ENCODE measurements at regions of chr9 and their contacts with region 1.

Region 1: GRCh38 chr9:132849185-132849706 is 28.8 kb downstream of the AK8 start:
- DNase-seq: no peak
- ATAC-seq: no peak
- H3K4me3 Mint-ChIP-seq: no peak overlapping the region
- H3K27ac Mint-ChIP-seq: peak overlapping the region; percentile 15; the same call in 1 of the 2 replicates
- H3K4me1 Mint-ChIP-seq: peaks cover 15% of the 10 kb centered on the region
- H3K27me3 Mint-ChIP-seq: no peaks in the 10 kb centered on the region; the same call in 1 of the 2 replicates
- CTCF ChIP-seq: no peak

Region 2: GRCh38 chr9:132018957-132019405 is 830.3 kb before region 1 on chr9:
- CTCF ChIA-PET with region 1: no interaction called
- POLR2A ChIA-PET with region 1: no interaction called
- DNase-seq: no peak
- ATAC-seq: no peak
- H3K4me3 Mint-ChIP-seq: no peak overlapping the region
- H3K27ac Mint-ChIP-seq: no peak overlapping the region
- H3K4me1 Mint-ChIP-seq: peaks cover 73% of the 10 kb centered on the region
- H3K27me3 Mint-ChIP-seq: no peaks in the 10 kb centered on the region
- CTCF ChIP-seq: no peak

Region 3: DNA sequence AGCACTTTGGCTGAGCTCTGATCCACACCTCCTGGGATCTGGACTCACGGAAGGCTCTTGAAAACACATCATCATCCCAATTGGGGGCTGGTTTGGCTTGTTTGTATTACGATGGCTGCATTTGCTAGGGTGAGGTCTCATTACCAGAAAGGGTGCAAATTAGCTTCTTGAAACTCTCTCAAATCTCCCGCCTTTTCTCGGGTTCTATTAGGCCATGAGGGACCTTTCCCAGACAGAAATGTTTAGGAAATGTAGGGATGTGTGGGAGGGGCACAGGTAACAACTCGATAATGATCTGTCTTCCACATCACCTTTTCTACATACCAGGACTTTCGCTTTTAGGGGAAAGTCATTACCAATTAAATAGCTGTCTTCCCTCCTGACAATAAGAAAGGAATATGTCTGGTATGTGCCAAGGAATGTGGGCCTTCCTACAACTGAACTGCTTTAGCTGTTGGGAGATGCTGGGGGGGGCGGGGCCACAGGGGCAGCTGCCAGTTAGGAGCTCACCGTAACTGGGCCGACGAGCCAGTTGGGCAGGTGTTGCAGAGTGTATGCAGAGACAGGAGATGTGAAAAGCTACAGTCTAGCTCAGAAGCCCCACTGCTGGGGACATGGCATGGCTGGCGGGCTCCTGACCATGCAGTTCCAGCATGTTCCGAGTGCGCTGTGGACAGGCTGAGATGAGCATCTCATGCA is 42.4 kb before region 1 on chr9:
- CTCF ChIA-PET with region 1: interaction called, 10 read pairs
- POLR2A ChIA-PET with region 1: no interaction called
- DNase-seq: peak; percentile 75
- ATAC-seq: peak; percentile 89
- H3K4me3 Mint-ChIP-seq: no peak overlapping the region
- H3K27ac Mint-ChIP-seq: peak overlapping the region; percentile 78
- H3K4me1 Mint-ChIP-seq: peaks cover 35% of the 10 kb centered on the region
- H3K27me3 Mint-ChIP-seq: no peaks in the 10 kb centered on the region; the same call in 1 of the 2 replicates
- CTCF ChIP-seq: no peak

Region 4: DNA sequence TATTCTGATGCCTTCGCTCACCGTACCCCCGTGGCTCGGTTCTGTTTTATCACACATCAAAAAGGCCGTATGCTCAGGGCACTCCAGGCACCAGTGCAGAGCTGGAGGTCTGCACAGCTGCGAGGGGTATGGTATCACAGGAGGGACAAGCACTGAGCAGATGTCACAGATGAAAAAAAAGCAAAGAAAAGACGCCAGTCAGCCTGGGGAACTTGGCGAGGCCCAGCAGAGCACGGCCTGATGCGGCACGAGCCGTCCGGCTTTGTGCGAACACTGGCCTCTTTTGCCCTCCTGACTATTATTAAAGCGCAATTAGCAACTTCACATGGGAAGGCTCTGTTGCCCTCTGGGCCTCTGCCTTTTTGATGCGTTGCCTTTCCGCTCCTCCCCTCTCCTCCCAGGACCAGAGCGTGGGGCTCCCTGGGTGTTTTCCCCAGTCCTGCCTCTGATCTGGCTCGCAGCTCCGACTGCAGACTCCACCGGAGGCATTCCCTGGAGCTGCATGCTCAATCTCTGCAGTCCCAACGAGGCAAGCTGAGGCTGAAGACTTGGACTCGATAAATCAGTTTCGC is 15.6 kb before region 1 on chr9:
- CTCF ChIA-PET with region 1: interaction called, 16 read pairs
- POLR2A ChIA-PET with region 1: no interaction called
- DNase-seq: no peak
- ATAC-seq: no peak
- H3K4me3 Mint-ChIP-seq: no peak overlapping the region
- H3K27ac Mint-ChIP-seq: peak overlapping the region; percentile 58; the same call in 1 of the 2 replicates
- H3K4me1 Mint-ChIP-seq: no peaks in the 10 kb centered on the region
- H3K27me3 Mint-ChIP-seq: no peaks in the 10 kb centered on the region
- CTCF ChIP-seq: no peak

Region 5: GRCh38 chr9:132877824-132878694 is 28.8 kb after region 1 on chr9 and contains the start of gene AK8:
- CTCF ChIA-PET with region 1: interaction called, 11 read pairs
- POLR2A ChIA-PET with region 1: interaction called, 3 read pairs
- DNase-seq: peak; percentile 77
- ATAC-seq: peak; percentile 69
- H3K4me3 Mint-ChIP-seq: peak within 1 kb of the TSS; percentile 74
- H3K27ac Mint-ChIP-seq: no peak within 1 kb of the TSS
- H3K4me1 Mint-ChIP-seq: 0 out of 2 replicates have a peak, but pooled peaks cover 3% of the 10 kb centered on the region
- H3K27me3 Mint-ChIP-seq: peaks cover 42% of the 10 kb centered on the region
- CTCF ChIP-seq: no peak
- total RNA-seq, gene AK8: 0.27 to 0.50 TPM (median 0.48 TPM) in 3 replicates